Activated CD8-positive, alpha-beta T cell treated with anti-CD3 and anti-CD28 coated beads for 36 hours (primary cell): ENCODE measurements at regions of chr17 and their contacts with region 1.

Region 1: DNA sequence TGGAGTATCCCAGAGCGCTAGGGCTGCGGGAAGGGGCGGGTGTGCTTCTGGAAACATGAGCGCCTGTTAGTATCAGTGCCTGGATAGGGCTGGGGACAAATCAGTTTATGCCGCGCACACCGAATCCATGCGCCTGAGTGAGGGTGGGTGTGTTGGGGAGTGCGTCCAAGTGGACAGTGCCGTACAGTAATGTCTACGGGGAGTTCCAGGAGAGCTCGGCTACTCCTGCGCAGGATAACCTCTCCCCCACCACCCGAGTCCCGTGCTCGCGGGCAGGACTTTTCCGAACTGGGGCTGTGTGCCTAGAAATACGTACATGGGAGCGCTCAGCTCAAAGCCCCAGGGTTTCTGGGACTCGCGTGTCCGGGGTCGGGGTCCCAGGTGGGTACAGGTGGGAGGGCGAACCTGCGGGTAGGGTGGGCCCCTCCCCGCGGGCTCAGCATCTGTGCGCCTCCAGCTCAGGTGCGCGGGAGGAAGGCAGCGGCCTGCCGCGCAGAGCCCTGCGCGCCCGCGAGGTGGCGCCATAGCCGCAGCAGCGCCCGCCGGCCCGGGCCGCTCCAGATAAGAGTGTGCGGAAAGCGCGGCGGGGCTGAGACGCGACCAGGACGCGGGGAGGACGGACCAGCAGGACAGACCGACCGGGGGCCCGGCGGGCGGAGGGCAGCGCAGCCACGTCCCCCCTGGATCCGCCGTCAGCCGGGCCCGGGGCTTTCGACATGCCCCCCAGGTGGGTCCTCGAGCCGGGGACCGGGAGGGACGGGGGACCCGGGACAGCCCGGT is at the start of gene HIC1:
- DNase-seq: peak; percentile 84
- ATAC-seq: peak; percentile 52
- H3K4me3 Mint-ChIP-seq: peak within 1 kb of the TSS; percentile 74
- H3K27ac Mint-ChIP-seq: peak within 1 kb of the TSS; percentile 52
- H3K4me1 Mint-ChIP-seq: peaks cover 16% of the 10 kb centered on the region
- H3K27me3 Mint-ChIP-seq: peaks cover 9% of the 10 kb centered on the region
- CTCF ChIP-seq: peak; percentile 97
- total RNA-seq, gene HIC1: 35.1 TPM

Region 2: DNA sequence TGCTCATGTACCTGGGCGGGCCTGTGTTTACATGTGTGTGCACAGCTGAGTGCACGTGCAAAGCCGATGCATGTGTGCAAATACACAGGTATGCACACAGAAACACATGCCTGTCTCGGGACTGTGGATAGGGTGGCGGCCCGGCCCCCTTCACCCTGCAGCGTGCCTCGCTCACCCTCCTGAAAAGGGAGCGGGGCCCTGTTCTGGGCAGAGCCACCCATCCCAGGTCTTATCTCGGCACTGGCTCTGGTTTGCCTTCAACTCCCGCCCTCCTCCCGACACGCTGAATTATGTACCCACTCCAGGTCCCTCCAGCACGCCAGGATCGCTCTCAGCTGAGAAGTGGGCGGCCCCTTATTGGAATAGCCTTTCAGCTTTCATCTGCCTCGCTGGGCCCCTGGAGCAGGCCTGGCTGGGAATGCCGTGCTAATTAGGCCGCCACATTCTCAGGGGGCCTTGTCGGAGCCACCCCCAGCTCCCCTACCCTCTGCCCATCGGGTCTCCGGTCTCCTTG is 107.4 kb before region 1 on chr17:
- CTCF ChIA-PET with region 1: no interaction called
- POLR2A ChIA-PET with region 1: no interaction called
- intact Hi-C with region 1: no loop called
- DNase-seq: no peak
- ATAC-seq: no peak
- H3K4me3 Mint-ChIP-seq: no peak overlapping the region
- H3K27ac Mint-ChIP-seq: no peak overlapping the region
- H3K4me1 Mint-ChIP-seq: no peaks in the 10 kb centered on the region
- H3K27me3 Mint-ChIP-seq: no peaks in the 10 kb centered on the region
- CTCF ChIP-seq: no peak

Region 3: GRCh38 chr17:2011411-2012371 is 43.0 kb before region 1 on chr17:
- CTCF ChIA-PET with region 1: no interaction called
- POLR2A ChIA-PET with region 1: no interaction called
- intact Hi-C with region 1: no loop called
- DNase-seq: no peak
- ATAC-seq: no peak
- H3K4me3 Mint-ChIP-seq: no peak overlapping the region
- H3K27ac Mint-ChIP-seq: no peak overlapping the region
- H3K4me1 Mint-ChIP-seq: no peaks in the 10 kb centered on the region
- H3K27me3 Mint-ChIP-seq: peaks cover 2% of the 10 kb centered on the region
- CTCF ChIP-seq: no peak

Region 4: DNA sequence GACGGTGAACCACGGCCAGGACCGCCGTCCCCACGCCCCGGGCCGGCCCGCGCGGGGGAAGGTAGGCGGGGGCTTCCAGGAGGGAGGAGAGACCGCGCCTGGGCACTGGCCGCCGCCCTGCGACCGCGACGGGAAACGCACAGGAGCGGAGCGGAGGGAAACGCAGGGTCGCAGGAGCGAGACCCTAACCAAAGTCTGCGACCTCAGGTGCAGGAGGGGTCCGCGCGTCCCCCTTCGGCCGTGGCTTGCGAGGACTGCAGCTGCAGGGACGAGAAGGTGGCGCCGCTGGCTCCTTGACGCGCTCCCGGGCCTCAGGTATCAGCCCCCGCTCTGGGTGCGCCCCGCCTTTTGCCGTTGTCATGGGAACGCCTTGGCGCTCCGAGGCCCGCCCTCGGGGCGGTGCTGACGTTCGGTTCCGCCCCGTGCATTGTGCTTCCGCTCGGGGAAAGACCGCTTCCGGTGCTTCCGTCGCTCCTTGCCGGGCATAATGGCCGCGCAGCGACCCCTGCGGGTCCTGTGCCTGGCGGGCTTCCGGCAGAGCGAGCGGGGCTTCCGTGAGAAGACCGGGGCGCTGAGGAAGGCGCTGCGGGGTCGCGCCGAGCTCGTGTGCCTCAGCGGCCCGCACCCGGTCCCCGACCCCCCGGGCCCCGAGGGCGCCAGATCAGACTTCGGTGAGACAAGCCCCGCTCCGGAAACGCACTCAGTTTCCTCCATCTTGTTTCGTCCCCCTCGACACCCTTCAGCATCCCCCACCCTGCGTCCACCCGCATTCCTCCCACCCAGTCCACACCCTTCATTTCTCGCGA is 12.9 kb before region 1 on chr17 and contains the start of gene OVCA2:
- CTCF ChIA-PET with region 1: interaction called, 13 read pairs
- POLR2A ChIA-PET with region 1: interaction called, 4 read pairs
- intact Hi-C with region 1: no loop called
- DNase-seq: peak; percentile 97
- ATAC-seq: peak; percentile 93
- H3K4me3 Mint-ChIP-seq: peak within 1 kb of the TSS; percentile 94
- H3K27ac Mint-ChIP-seq: peak within 1 kb of the TSS; percentile 97
- H3K4me1 Mint-ChIP-seq: peaks cover 20% of the 10 kb centered on the region
- H3K27me3 Mint-ChIP-seq: no peaks in the 10 kb centered on the region
- CTCF ChIP-seq: no peak
- total RNA-seq, gene OVCA2: 28.0 to 28.5 TPM

Region 5: GRCh38 chr17:2070241-2071023 is 15.7 kb after region 1 on chr17:
- CTCF ChIA-PET with region 1: interaction called, 121 read pairs
- POLR2A ChIA-PET with region 1: interaction called, 46 read pairs
- intact Hi-C with region 1: no loop called
- DNase-seq: peak; percentile 93
- ATAC-seq: peak; percentile 85
- H3K4me3 Mint-ChIP-seq: peak overlapping the region; percentile 21
- H3K27ac Mint-ChIP-seq: peak overlapping the region; percentile 80
- H3K4me1 Mint-ChIP-seq: peaks cover 48% of the 10 kb centered on the region
- H3K27me3 Mint-ChIP-seq: no peaks in the 10 kb centered on the region
- CTCF ChIP-seq: no peak

Region 6: GRCh38 chr17:2094891-2095535 is 40.3 kb after region 1 on chr17:
- CTCF ChIA-PET with region 1: interaction called, 74 read pairs
- POLR2A ChIA-PET with region 1: interaction called, 10 read pairs
- intact Hi-C with region 1: no loop called
- DNase-seq: no peak
- ATAC-seq: peak; percentile 22
- H3K4me3 Mint-ChIP-seq: no peak overlapping the region
- H3K27ac Mint-ChIP-seq: no peak overlapping the region
- H3K4me1 Mint-ChIP-seq: peaks cover 18% of the 10 kb centered on the region
- H3K27me3 Mint-ChIP-seq: no peaks in the 10 kb centered on the region
- CTCF ChIP-seq: no peak

Region 7: DNA sequence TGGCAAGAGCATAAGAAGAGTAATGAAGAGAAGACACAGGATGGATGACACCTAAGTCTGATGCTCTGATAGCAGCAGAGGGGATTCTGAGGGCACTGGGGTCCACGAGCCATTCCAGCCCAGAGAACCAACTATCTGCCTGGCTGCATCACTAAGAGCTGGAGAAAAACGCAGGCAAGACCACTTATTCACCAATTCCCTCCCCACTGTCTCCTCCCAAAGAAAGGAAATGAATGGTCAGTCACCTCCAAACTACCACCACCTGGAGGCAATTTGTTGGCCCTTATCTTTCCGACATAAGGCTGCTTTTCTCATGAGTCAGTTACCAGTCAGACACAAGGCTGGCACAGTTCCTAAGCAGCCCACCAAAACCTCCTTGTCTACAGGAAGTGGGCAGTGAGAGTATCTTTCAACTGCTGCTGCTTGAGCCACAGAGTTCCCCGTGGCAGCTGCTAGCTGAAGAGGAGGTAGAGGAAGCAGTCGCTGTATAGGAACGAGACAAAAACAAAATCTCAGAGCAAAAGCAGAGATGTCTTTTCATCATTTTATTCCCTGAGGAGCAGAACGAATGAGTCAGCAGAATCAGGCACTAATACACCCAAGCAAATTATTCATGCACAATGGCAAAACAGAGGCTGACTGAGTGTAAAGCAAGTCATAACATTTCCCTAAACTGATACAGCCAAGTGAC is 137.8 kb after region 1 on chr17:
- CTCF ChIA-PET with region 1: interaction called, 14 read pairs
- POLR2A ChIA-PET with region 1: no interaction called
- intact Hi-C with region 1: no loop called
- DNase-seq: peak; percentile 86
- ATAC-seq: peak; percentile 86
- H3K4me3 Mint-ChIP-seq: no peak overlapping the region
- H3K27ac Mint-ChIP-seq: peak overlapping the region; percentile 50
- H3K4me1 Mint-ChIP-seq: peaks cover 54% of the 10 kb centered on the region
- H3K27me3 Mint-ChIP-seq: no peaks in the 10 kb centered on the region
- CTCF ChIP-seq: no peak

Region 8: DNA sequence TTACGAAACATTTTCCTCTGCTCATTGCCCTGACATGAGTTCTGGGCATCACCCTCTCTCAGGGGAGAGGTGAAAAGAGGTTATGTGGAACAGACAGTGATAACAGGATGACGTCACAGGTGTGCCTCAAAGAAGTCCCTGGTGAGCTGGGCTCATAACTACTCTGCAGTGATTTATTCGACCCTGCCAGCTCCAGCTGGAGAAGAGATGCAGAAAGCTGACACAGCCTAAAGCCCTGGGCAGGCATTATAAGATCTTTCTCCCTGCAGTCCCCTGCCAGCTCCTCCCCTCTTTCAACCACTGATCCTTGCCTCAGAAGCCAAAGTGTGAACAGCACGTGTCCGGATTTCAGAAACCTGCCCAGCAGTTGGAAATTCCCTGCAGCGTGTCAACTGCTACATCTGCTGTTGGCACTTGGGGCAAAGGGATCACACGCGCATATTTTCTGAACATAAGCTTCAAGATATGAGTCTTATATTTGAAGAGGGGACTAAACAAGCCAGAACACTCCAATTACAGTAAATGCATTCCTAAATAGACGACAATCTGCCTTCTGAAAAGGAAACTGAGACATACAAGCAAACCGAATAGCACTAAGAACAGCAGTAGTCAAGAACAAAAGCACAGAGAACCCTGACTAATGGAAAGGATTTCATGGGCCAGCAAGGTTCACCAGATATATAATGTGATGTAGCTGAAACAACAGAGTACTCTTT is 168.4 kb after region 1 on chr17:
- CTCF ChIA-PET with region 1: interaction called, 23 read pairs
- POLR2A ChIA-PET with region 1: no interaction called
- intact Hi-C with region 1: no loop called
- DNase-seq: peak; percentile 74
- ATAC-seq: peak; percentile 86
- H3K4me3 Mint-ChIP-seq: peak overlapping the region; percentile 58
- H3K27ac Mint-ChIP-seq: peak overlapping the region; percentile 80
- H3K4me1 Mint-ChIP-seq: peaks cover 43% of the 10 kb centered on the region
- H3K27me3 Mint-ChIP-seq: no peaks in the 10 kb centered on the region
- CTCF ChIP-seq: no peak

Region 9: DNA sequence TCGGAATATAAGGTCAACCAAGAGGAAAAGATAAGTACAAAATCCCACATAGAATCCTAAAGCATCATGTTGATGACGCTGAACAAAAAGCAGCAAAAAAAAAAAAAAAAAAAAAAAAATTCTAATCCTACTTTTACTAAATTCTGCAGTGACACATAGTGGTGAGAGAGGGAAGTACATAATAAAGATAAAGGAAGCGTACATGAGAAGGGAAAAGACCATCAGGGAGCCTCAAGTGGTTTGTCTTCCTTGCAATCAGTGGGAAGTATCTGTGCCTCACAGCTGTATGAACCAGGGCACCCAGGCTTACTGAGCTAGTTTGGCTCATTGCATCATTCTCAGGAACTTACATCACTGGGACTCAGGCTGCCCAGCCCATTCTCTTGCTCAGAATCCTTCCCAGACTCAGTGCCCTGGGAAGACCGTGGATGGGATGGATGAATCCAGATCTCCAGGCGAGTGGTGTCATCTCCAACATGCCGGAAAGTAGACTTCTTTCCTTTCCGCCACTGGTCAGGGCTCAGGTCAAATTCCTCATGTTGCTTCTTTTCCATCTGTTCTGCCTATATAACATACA is 227.7 kb after region 1 on chr17:
- CTCF ChIA-PET with region 1: interaction called, 78 read pairs
- POLR2A ChIA-PET with region 1: interaction called, 3 read pairs
- intact Hi-C with region 1: no loop called
- DNase-seq: no peak
- ATAC-seq: peak; percentile 81
- H3K4me3 Mint-ChIP-seq: no peak overlapping the region
- H3K27ac Mint-ChIP-seq: peak overlapping the region; percentile 77
- H3K4me1 Mint-ChIP-seq: peaks cover 33% of the 10 kb centered on the region
- H3K27me3 Mint-ChIP-seq: no peaks in the 10 kb centered on the region
- CTCF ChIP-seq: peak; percentile 73